SK-N-SH (cell line): ENCODE measurements at regions of chr2 and their contacts with region 1.

Region 1: DNA sequence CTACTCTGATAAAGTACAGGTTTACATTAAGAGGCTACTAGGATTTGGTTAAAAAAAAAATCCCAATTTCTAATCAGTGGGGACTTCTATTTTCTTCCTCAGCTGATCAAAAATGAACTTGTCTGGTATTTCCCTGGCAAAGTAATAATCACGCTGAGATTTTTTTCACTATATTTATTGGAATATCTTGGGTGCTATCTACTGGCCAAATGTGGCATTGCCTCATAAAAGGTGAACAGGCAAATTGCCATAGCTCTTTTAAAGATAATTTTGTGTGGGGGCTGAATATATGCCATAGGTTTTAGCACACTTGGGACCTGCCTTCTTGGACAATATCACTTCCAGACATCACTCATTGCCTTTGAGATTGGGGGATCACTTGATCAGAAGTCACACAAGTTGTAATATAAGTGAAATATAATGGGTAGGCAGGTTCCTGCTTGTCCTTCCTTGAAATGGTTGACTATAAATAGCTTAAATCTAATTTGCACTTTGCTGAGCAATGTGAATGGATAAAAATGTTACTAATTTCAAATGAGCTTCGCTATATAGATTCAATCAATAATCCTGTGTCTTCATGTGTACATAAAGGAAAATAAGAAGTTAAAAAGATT is 7.0 kb upstream of the NXPH2 start:
- DNase-seq: peak; percentile 49
- H3K4me3 ChIP-seq: peak overlapping the region in 1 of 2 experiments; percentile 30; a peak in 1 of 4 replicates
- H3K27ac ChIP-seq: no peak overlapping the region
- H3K4me1 ChIP-seq: no peaks in the 10 kb centered on the region
- H3K27me3 ChIP-seq: no peaks in the 10 kb centered on the region; the same call in 1 of the 2 replicates
- CTCF ChIP-seq: peak; percentile 83
- EP300 ChIP-seq: no peak
- RAD21 ChIP-seq: peak; percentile 90

Region 2: GRCh38 chr2:137865954-137866540 is 921.1 kb before region 1 on chr2:
- CTCF ChIA-PET with region 1: interaction called, 12 read pairs
- POLR2A ChIA-PET with region 1: no interaction called
- DNase-seq: peak; percentile 36
- H3K4me3 ChIP-seq: no peak overlapping the region; a peak in 1 of 4 replicates
- H3K27ac ChIP-seq: no peak overlapping the region
- H3K4me1 ChIP-seq: no peaks in the 10 kb centered on the region
- H3K27me3 ChIP-seq: no peaks in the 10 kb centered on the region
- CTCF ChIP-seq: peak; percentile 74
- EP300 ChIP-seq: no peak
- RAD21 ChIP-seq: peak; percentile 86

Region 3: DNA sequence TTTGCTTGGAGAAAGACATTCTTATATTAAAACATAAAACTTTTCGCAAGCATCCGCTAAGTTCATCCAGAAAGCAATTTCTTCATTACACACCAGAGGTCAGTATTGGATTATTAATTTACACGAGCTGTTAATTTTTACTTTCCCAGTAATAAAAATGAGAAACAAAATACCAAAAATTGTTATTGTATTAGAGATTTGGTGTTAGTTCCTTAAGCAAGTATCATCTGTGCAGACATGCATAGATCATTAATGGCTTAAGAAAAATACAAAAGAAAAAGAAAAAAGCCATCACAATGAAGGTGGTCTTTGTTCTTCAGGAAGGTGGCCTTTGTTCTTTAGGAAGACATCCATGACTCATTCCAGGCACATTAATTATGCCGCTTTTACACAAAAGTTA is 876.5 kb before region 1 on chr2:
- CTCF ChIA-PET with region 1: interaction called, 55 read pairs
- POLR2A ChIA-PET with region 1: no interaction called
- DNase-seq: no peak
- H3K4me3 ChIP-seq: no peak overlapping the region
- H3K27ac ChIP-seq: no peak overlapping the region
- H3K4me1 ChIP-seq: no peaks in the 10 kb centered on the region
- H3K27me3 ChIP-seq: no peaks in the 10 kb centered on the region; the same call in 1 of the 2 replicates
- CTCF ChIP-seq: peak; percentile 72
- EP300 ChIP-seq: no peak
- RAD21 ChIP-seq: peak; percentile 80

Region 4: GRCh38 chr2:137947728-137948336 is 839.3 kb before region 1 on chr2:
- CTCF ChIA-PET with region 1: interaction called, 19 read pairs
- POLR2A ChIA-PET with region 1: no interaction called
- DNase-seq: peak; percentile 32
- H3K4me3 ChIP-seq: no peak overlapping the region
- H3K27ac ChIP-seq: no peak overlapping the region
- H3K4me1 ChIP-seq: no peaks in the 10 kb centered on the region; a peak in 1 of 4 replicates
- H3K27me3 ChIP-seq: no peaks in the 10 kb centered on the region
- CTCF ChIP-seq: peak; percentile 81
- EP300 ChIP-seq: no peak
- RAD21 ChIP-seq: peak; percentile 85

Region 5: DNA sequence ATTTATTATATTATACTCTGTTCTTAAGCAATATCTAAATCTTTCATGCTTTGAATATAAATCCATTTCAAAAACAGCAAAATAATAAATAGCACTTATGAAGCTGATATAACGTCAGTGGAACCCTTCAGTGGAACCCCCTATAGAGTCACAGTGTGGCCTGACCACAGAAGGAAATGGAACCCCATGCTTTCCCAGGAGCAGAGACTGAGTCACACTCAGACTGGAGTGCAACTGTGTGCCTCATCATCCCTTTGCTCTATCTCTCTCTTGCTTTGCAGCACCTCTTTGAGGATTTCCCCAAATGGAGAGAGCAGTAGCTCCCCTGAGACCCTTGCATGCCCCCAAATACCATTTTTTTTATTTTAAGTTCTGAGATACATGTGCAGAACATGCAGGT is 20.1 kb before region 1 on chr2:
- CTCF ChIA-PET with region 1: interaction called, 13 read pairs
- POLR2A ChIA-PET with region 1: no interaction called
- DNase-seq: no peak
- H3K4me3 ChIP-seq: no peak overlapping the region
- H3K27ac ChIP-seq: no peak overlapping the region
- H3K4me1 ChIP-seq: no peaks in the 10 kb centered on the region
- H3K27me3 ChIP-seq: no peaks in the 10 kb centered on the region
- CTCF ChIP-seq: no peak
- EP300 ChIP-seq: no peak
- RAD21 ChIP-seq: no peak